ENCODE measurements at regions of chr17 and their contacts with region 1.

Region 1: DNA sequence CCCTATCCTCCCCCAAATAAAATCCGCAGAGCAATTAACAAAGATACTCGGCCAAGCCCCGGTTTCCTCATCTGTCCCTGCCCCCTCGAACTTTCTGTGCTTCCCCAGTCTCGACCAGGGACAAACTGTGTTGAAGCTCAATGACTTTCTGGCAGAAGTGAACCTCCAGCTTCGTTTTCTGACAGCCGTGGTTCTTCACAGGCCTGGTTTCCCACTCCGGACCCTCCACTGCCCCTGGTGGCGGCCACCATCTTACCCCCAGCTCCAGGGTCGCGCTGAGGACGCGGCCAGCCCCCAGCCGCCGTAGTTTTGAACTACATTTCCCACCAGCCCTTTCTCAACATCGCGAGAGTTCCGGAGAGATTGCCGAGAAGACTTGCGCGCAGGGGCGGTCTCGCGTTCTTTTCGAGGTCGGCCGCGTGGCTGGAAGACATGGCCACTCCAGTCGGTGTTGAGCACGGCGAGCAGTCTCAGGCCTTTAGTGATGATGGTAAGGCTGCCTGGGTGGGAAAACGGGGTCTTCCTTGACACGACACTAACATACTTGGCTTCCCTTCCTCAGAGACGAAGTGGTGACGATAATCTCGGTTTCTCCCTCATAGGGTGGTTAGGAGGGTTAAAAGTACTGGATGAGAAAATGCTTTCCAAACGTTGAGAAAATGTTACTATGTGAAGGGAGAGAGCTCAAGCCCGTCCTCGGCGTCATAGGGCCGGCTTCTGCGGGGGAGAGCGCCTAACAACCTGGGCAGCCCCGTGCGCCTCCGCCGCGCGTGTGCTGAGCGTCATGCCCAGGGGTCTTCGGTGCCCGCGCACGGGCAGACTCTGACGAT is 17.7 kb downstream of the PRCD start:
- DNase-seq: peak; percentile 84 to 99
- ATAC-seq: peak; percentile 96
- H3K4me3 ChIP-seq: peak overlapping the region; percentile 87
- H3K27ac ChIP-seq: peak overlapping the region; percentile 90 to 96
- H3K4me1 ChIP-seq: peaks cover 39% of the 10 kb centered on the region
- CTCF ChIP-seq: peak; percentile 54
- EP300 ChIP-seq: no peak
- POLR2A ChIP-seq: peak; percentile 99
- RAD21 ChIP-seq: no peak; a peak in 1 of 5 replicates

Region 2: GRCh38 chr17:76063875-76064546 is 493.6 kb before region 1 on chr17:
- CTCF ChIA-PET with region 1: no interaction called
- POLR2A ChIA-PET with region 1: no interaction called
- DNase-seq: no peak
- ATAC-seq: no peak
- H3K4me3 ChIP-seq: no peak overlapping the region
- H3K27ac ChIP-seq: no peak overlapping the region
- H3K4me1 ChIP-seq: no peaks in the 10 kb centered on the region
- CTCF ChIP-seq: no peak
- EP300 ChIP-seq: no peak
- POLR2A ChIP-seq: no peak
- RAD21 ChIP-seq: no peak

Region 3: GRCh38 chr17:76540381-76541300 is 16.9 kb before region 1 on chr17:
- CTCF ChIA-PET with region 1: interaction called, 69 read pairs
- POLR2A ChIA-PET with region 1: interaction called, 21 read pairs
- DNase-seq: peak; percentile 94 to 100
- ATAC-seq: peak; percentile 93 to 99
- H3K4me3 ChIP-seq: peak overlapping the region; percentile 30
- H3K27ac ChIP-seq: peak overlapping the region; percentile 79 to 86
- H3K4me1 ChIP-seq: peaks cover 13% of the 10 kb centered on the region
- CTCF ChIP-seq: no peak
- EP300 ChIP-seq: no peak
- POLR2A ChIP-seq: peak; percentile 84
- RAD21 ChIP-seq: no peak

Region 4: DNA sequence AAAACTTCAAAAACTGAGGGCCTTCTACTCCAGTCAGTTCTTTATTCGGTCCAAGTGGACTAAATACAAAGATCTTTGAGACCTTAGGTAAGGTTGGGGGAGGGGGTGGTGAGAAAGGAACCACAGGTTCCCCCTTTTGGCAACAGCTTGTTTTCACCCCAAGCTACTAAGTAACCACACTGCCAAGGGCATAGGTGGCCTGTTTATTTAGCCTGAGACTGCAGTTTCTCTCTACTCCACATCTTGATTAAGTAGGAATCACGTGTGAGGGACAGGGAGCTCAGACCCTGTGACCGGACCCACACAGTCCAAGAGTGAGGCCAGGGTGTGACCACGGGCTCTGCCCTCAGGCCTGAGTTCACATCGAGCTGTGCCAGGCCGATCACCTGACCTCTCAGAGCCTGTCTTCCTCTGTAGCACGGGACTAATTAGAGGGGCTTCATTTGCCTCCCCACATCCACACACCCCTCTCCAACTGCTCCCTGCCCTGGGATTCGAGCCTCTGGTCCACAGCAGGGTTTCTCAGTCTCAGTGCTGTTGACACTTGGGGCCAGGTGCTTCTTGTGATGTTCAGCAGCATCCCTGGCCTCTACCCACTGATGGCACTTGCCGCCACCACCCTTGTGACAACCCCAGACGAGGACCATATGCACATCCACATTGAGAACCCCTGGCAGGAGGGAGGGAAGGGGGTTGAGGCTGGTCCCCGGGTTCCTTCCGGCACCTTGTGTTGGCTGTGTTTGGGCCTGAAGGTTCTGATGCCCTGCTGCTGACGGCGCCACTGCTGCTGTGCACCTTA is 10.2 kb after region 1 on chr17:
- CTCF ChIA-PET with region 1: interaction called, 36 read pairs
- POLR2A ChIA-PET with region 1: interaction called, 20 read pairs
- DNase-seq: no peak
- ATAC-seq: peak; percentile 30 to 46
- H3K4me3 ChIP-seq: no peak overlapping the region
- H3K27ac ChIP-seq: peak overlapping the region in 1 of 2 experiments; percentile 23; a peak in 2 of 6 replicates
- H3K4me1 ChIP-seq: peaks cover 34% of the 10 kb centered on the region; the same call in 2 of the 3 replicates
- CTCF ChIP-seq: no peak
- EP300 ChIP-seq: no peak
- POLR2A ChIP-seq: no peak
- RAD21 ChIP-seq: no peak

Region 5: GRCh38 chr17:76585818-76586593 is 28.4 kb after region 1 on chr17 and contains the start of gene ST6GALNAC2:
- CTCF ChIA-PET with region 1: interaction called, 14 read pairs
- POLR2A ChIA-PET with region 1: interaction called, 7 read pairs
- DNase-seq: peak; percentile 59 to 70
- ATAC-seq: peak; percentile 84 to 92
- H3K4me3 ChIP-seq: peak within 1 kb of the TSS; percentile 64
- H3K27ac ChIP-seq: peak within 1 kb of the TSS; percentile 76 to 89
- H3K4me1 ChIP-seq: 0 out of 3 replicates have a peak, but pooled peaks cover 3% of the 10 kb centered on the region
- CTCF ChIP-seq: peak; percentile 25; the same call in 2 of the 3 replicates
- EP300 ChIP-seq: no peak
- POLR2A ChIP-seq: no peak
- RAD21 ChIP-seq: peak; percentile 33 to 59; a peak in 4 of 5 replicates
- polyA plus RNA-seq, gene ST6GALNAC2: 0.74 and 0.78 TPM in 2 replicates

Region 6: GRCh38 chr17:76681222-76682137 is 123.9 kb after region 1 on chr17:
- CTCF ChIA-PET with region 1: interaction called, 31 read pairs
- POLR2A ChIA-PET with region 1: interaction called, 4 read pairs
- DNase-seq: peak; percentile 77 to 84
- ATAC-seq: peak; percentile 75 to 90; a peak in 5 of 6 replicates
- H3K4me3 ChIP-seq: no peak overlapping the region
- H3K27ac ChIP-seq: no peak overlapping the region
- H3K4me1 ChIP-seq: no peaks in the 10 kb centered on the region
- CTCF ChIP-seq: peak; percentile 83
- EP300 ChIP-seq: no peak
- POLR2A ChIP-seq: no peak
- RAD21 ChIP-seq: peak; percentile 82 to 84

Measured in A549 (cell line).